ENCODE measurements at regions of chr14 and their contacts with region 1.

Region 1: DNA sequence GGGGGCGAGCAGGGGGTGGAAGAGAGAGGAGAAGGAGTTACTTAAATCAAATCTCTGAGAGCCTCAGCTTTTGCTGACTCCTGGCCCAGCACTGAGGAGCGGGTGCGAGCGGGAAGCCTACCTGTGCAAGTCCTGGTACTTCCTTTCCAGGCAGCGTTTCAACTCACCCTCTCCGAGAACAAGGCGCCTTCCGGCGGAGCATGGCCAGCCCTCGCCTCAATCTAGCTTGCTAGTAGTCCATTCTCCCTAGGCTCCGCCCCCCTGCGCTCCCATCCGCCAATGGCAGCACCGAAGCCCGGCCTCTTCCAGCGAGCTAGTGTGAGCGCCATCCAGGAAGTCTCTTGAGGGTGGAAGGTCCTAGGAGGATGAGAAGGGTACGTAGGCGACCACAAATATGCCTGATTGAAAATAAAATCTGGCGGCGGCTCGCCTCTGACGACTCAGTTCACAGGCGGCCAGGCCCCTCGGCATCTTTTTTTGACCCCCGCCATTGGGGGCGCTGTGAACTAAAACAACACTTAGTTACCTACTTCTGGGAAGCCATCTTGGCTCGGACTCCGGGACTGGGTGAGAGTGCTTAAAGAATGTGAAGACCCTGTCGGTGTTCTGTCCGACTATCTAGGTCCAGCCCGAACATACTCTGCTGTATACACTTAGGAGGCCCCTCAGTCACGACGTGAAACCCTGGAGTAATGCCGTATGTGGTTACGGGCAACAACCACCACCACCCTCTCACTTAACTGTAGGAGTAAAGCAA is at the start of gene CHD8:
- DNase-seq: peak; percentile 95 to 100 (median 100)
- ATAC-seq: peak; percentile 98
- H3K4me3 ChIP-seq: peak within 1 kb of the TSS; percentile 91
- H3K4me3 Mint-ChIP-seq: peak within 1 kb of the TSS; percentile 89 to 100 (median 98)
- H3K27ac ChIP-seq: peak within 1 kb of the TSS; percentile 94
- H3K27ac Mint-ChIP-seq: peak within 1 kb of the TSS; percentile 96 to 100 (median 99)
- H3K4me1 ChIP-seq: peaks cover 17 to 21% of the 10 kb centered on the region in 2 donors
- H3K4me1 Mint-ChIP-seq: peaks cover 18 to 48% (median 41%) of the 10 kb centered on the region in 7 donors
- H3K27me3 ChIP-seq: no peaks in the 10 kb centered on the region
- H3K27me3 Mint-ChIP-seq: no peaks in the 10 kb centered on the region
- total RNA-seq, gene CHD8: 125 to 143 (median 133) TPM

Region 2: GRCh38 chr14:20682435-20683124 is 773.5 kb before region 1 on chr14:
- CTCF ChIA-PET with region 1: no interaction called
- POLR2A ChIA-PET with region 1: no interaction called
- intact Hi-C with region 1: loop called in 1 of 2 experiments (anchors 2 kb)
- DNase-seq: peak; percentile 63 to 83 (median 79)
- ATAC-seq: peak; percentile 75
- H3K4me3 ChIP-seq: peak overlapping the region; percentile 98
- H3K4me3 Mint-ChIP-seq: no peak overlapping the region
- H3K27ac ChIP-seq: peak overlapping the region; percentile 91
- H3K27ac Mint-ChIP-seq: no peak overlapping the region
- H3K4me1 ChIP-seq: peaks cover 18 to 24% of the 10 kb centered on the region in 2 donors
- H3K4me1 Mint-ChIP-seq: peaks cover 14 to 35% (median 32%) of the 10 kb centered on the region in 7 donors
- H3K27me3 ChIP-seq: no peaks in the 10 kb centered on the region
- H3K27me3 Mint-ChIP-seq: no peaks in the 10 kb centered on the region

Region 3: DNA sequence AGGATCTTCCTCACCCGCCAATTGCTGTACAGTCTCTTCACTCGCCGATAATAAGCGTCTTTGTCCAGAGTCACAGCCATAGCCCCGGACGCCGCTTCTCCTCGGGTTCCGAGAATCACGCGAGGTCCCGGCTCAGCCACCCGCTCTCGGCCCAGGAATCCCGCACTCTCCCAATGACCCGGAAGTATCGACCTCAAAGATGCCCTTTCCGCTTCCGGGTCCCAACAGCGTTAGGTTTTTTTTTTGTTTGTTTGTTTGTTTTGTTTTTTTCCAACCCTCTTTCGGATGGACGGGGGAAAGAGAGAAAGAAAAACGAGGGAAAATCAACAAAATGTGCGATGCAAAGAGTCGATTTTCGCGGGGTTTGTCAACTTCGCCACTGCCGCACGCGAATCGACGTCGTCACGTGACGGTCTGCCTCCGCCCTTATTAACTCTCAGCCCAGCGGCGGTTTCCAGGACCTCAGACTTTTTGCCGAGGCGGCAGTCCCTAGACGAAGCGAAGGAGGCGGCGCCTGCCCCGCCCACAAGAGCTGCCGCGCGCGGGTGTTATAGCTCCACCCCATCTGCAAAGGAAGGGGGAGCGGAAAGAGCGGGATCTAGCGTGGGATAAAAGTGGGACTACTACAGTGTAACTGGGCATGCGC is 72.1 kb before region 1 on chr14 and contains the start of gene SUPT16H:
- CTCF ChIA-PET with region 1: interaction called, 5 read pairs
- POLR2A ChIA-PET with region 1: interaction called, 8 read pairs
- intact Hi-C with region 1: loop called (anchors 1 kb)
- DNase-seq: peak; percentile 78 to 91 (median 86)
- ATAC-seq: peak; percentile 97
- H3K4me3 ChIP-seq: peak within 1 kb of the TSS; percentile 98
- H3K4me3 Mint-ChIP-seq: peak within 1 kb of the TSS; percentile 92 to 99 (median 97)
- H3K27ac ChIP-seq: peak within 1 kb of the TSS; percentile 87
- H3K27ac Mint-ChIP-seq: peak within 1 kb of the TSS; percentile 97 to 100 (median 99)
- H3K4me1 ChIP-seq: peaks cover 3 to 11% of the 10 kb centered on the region in 2 donors
- H3K4me1 Mint-ChIP-seq: peaks cover 26 to 52% (median 45%) of the 10 kb centered on the region in 7 donors
- H3K27me3 ChIP-seq: no peaks in the 10 kb centered on the region
- H3K27me3 Mint-ChIP-seq: no peaks in the 10 kb centered on the region
- total RNA-seq, gene SUPT16H: 46.1 to 104 (median 78.6) TPM

Region 4: GRCh38 chr14:21498553-21499526 is 42.8 kb after region 1 on chr14:
- CTCF ChIA-PET with region 1: interaction called, 3 read pairs
- POLR2A ChIA-PET with region 1: interaction called, 3 read pairs
- intact Hi-C with region 1: loop called in 1 of 2 experiments (anchors 2 kb)
- DNase-seq: peak in 7 of 9 donors; percentile 35 to 68 (median 61)
- ATAC-seq: peak; percentile 87
- H3K4me3 ChIP-seq: no peak overlapping the region
- H3K4me3 Mint-ChIP-seq: peak overlapping the region in 8 of 10 donors; percentile 2 to 39 (median 24)
- H3K27ac ChIP-seq: peak overlapping the region; percentile 52
- H3K27ac Mint-ChIP-seq: peak overlapping the region; percentile 56 to 90 (median 79)
- H3K4me1 ChIP-seq: peaks cover 4 to 8% of the 10 kb centered on the region in 2 donors
- H3K4me1 Mint-ChIP-seq: peaks cover 14 to 39% (median 28%) of the 10 kb centered on the region in 7 donors
- H3K27me3 ChIP-seq: no peaks in the 10 kb centered on the region
- H3K27me3 Mint-ChIP-seq: no peaks in the 10 kb centered on the region

Region 5: DNA sequence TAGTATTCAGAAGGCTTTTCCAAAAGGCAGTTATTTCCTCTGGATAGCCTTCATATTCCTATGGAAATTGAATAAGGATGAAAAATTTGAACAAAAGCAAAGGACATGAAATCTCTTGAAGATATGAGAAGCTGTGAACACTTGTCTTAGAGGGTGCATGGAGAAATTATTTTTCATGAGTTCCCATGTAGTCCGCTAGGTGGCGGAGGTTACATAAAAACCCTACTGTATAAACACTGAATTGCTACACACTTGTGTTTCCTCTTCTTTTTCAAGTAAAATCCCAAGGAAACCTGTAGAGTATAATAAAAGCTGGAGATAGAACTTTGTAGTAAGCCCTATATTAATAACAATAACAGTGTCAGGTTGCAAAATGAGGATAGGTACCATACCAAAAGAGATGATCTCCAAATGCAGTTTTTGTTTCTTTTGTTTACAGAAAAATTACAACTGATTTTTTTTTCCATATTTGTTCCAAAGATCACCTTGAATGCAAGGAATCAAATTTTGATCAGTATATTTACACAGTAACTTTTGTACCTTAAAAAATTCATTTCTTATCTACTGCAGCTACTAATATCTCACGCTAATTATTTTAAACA is 255.4 kb after region 1 on chr14:
- CTCF ChIA-PET with region 1: no interaction called
- POLR2A ChIA-PET with region 1: no interaction called
- intact Hi-C with region 1: loop called in 1 of 2 experiments (anchors 10 kb)
- DNase-seq: peak in 5 of 9 donors; percentile 25 to 57 (median 37)
- ATAC-seq: peak; percentile 80
- H3K4me3 ChIP-seq: no peak overlapping the region
- H3K4me3 Mint-ChIP-seq: peak overlapping the region; percentile 25 to 82 (median 67)
- H3K27ac ChIP-seq: no peak overlapping the region
- H3K27ac Mint-ChIP-seq: peak overlapping the region in 7 of 9 donors; percentile 7 to 91 (median 72)
- H3K4me1 ChIP-seq: no peaks in the 10 kb centered on the region
- H3K4me1 Mint-ChIP-seq: peaks cover 0 to 8% (median 5%) of the 10 kb centered on the region in 7 donors
- H3K27me3 ChIP-seq: peaks cover 0 to 3% of the 10 kb centered on the region in 2 donors
- H3K27me3 Mint-ChIP-seq: peaks cover 9 to 44% (median 23%) of the 10 kb centered on the region in 5 donors

Region 6: GRCh38 chr14:21725250-21725649 is 269.2 kb after region 1 on chr14:
- CTCF ChIA-PET with region 1: no interaction called
- POLR2A ChIA-PET with region 1: no interaction called
- intact Hi-C with region 1: no loop called
- DNase-seq: no peak
- ATAC-seq: no peak
- H3K4me3 ChIP-seq: no peak overlapping the region
- H3K4me3 Mint-ChIP-seq: no peak overlapping the region
- H3K27ac ChIP-seq: no peak overlapping the region
- H3K27ac Mint-ChIP-seq: peak overlapping the region in 1 of 9 donors; percentile 43
- H3K4me1 ChIP-seq: no peaks in the 10 kb centered on the region
- H3K4me1 Mint-ChIP-seq: peaks cover 0 to 13% (median 8%) of the 10 kb centered on the region in 7 donors
- H3K27me3 ChIP-seq: no peaks in the 10 kb centered on the region
- H3K27me3 Mint-ChIP-seq: peaks cover 25 to 36% (median 27%) of the 10 kb centered on the region in 5 donors

Region 7: DNA sequence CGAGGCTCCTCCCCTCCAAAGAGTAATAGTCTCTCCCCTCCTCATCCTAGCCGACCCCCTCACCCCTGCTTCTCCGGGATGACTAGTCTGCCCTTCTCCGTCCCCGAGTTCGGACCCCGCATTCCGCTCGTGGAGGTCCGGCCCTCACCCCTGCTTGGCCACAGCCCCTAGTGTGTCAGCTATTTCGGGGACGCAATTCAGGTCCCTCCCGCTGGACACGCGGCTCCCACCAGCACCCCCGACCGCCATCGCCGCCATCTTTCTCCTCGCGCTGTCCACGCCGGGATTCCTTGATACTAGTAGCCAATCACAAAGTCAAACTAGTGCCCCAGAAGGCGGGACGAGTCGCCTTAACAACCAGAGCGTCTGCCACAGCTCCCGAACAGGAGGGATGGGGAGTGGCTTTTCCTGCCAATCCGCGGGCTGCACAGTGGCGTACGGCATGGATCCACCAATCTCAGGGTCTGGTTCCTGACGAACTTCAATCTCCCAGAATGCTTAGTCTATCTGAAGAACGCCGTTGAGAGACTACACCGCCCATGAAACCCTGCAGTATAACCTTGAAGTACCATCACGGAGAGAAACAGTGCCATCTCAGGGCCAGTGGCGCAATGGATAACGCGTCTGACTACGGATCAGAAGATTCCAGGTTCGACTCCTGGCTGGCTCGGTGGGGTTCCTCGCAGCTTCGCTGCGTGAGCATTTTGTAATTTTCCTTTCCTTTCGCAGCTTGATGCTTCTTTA is 1473.2 kb after region 1 on chr14 and contains the start of gene PRMT5:
- CTCF ChIA-PET with region 1: no interaction called
- POLR2A ChIA-PET with region 1: no interaction called
- intact Hi-C with region 1: loop called in 1 of 2 experiments (anchors 10 kb)
- DNase-seq: peak; percentile 81 to 100 (median 99)
- ATAC-seq: peak; percentile 97
- H3K4me3 ChIP-seq: peak within 1 kb of the TSS; percentile 91
- H3K4me3 Mint-ChIP-seq: no peak within 1 kb of the TSS
- H3K27ac ChIP-seq: peak within 1 kb of the TSS; percentile 91
- H3K27ac Mint-ChIP-seq: no peak within 1 kb of the TSS
- H3K4me1 ChIP-seq: peaks cover 9 to 17% of the 10 kb centered on the region in 2 donors
- H3K4me1 Mint-ChIP-seq: peaks cover 5 to 36% (median 20%) of the 10 kb centered on the region in 7 donors
- H3K27me3 ChIP-seq: no peaks in the 10 kb centered on the region
- H3K27me3 Mint-ChIP-seq: no peaks in the 10 kb centered on the region
- total RNA-seq, gene PRMT5: 24.9 to 82.8 (median 34.2) TPM

Measured in naive thymus-derived CD4-positive, alpha-beta T cell (primary cell).